Naive thymus-derived CD4-positive, alpha-beta T cell (primary cell): ENCODE measurements at regions of chr18 and their contacts with region 1.

Region 1: GRCh38 chr18:35972197-35973052 is at the start of gene RMP24:
- DNase-seq: peak; percentile 80 to 93 (median 90)
- ATAC-seq: peak; percentile 94
- H3K4me3 ChIP-seq: peak within 1 kb of the TSS; percentile 76
- H3K4me3 Mint-ChIP-seq: peak within 1 kb of the TSS; percentile 83 to 100 (median 96)
- H3K27ac ChIP-seq: peak within 1 kb of the TSS; percentile 82
- H3K27ac Mint-ChIP-seq: peak within 1 kb of the TSS; percentile 91 to 99 (median 96)
- H3K4me1 ChIP-seq: peaks cover 33% of the 10 kb centered on the region in 2 donors
- H3K4me1 Mint-ChIP-seq: peaks cover 36 to 78% (median 67%) of the 10 kb centered on the region in 7 donors
- H3K27me3 ChIP-seq: no peaks in the 10 kb centered on the region
- H3K27me3 Mint-ChIP-seq: no peaks in the 10 kb centered on the region

Region 2: GRCh38 chr18:34976899-34977837 is 995.3 kb before region 1 on chr18:
- CTCF ChIA-PET with region 1: no interaction called
- POLR2A ChIA-PET with region 1: no interaction called
- intact Hi-C with region 1: loop called in 1 of 2 experiments (anchors 1 kb)
- DNase-seq: peak; percentile 60 to 78 (median 72)
- ATAC-seq: peak; percentile 84
- H3K4me3 ChIP-seq: peak overlapping the region; percentile 74
- H3K4me3 Mint-ChIP-seq: peak overlapping the region; percentile 89 to 99 (median 94)
- H3K27ac ChIP-seq: peak overlapping the region; percentile 54
- H3K27ac Mint-ChIP-seq: peak overlapping the region in 6 of 9 donors; percentile 24 to 72 (median 39)
- H3K4me1 ChIP-seq: no peaks in the 10 kb centered on the region
- H3K4me1 Mint-ChIP-seq: peaks cover 18 to 37% (median 24%) of the 10 kb centered on the region in 7 donors
- H3K27me3 ChIP-seq: peaks cover 0 to 3% of the 10 kb centered on the region in 2 donors
- H3K27me3 Mint-ChIP-seq: peaks cover 0 to 66% (median 0%) of the 10 kb centered on the region in 5 donors

Region 3: DNA sequence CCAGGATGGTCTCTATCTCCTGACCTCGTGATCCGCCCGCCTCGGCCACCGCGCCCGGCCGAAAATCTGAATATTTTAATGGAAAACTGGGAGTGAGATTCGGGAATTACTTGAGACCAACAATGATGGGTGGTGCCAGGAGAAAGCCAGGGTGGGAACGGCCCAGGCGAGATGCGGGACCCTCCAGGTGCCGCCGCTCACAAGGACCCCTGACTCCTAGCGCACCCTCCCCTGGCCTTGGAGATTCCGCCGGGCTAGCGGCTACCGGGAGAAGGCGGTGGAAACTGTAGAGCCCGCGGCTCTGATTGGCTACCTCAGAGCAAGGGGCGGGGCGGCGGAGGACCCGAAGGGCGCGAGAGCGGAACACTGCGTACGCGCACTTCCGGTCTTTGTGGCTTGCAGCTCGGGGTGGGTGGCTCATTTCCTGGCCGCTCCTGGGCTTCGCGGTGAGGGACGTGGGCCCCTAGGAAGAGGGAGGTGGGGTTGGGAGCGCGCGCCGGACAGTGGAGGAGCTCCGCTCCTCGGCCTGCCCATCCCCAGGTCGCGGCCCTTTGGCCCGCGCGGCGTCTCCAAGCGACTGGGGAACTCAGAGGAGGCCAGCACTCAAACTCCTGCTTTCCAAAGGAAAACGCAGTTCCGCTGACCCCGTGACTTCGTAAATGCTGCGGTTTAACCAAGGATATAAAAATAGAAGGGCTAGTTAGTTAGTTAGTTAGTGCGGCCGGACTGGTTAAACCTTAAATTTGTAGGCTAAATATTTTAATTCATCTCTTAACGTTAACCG is 731.6 kb before region 1 on chr18 and contains the start of gene ZNF397:
- CTCF ChIA-PET with region 1: no interaction called
- POLR2A ChIA-PET with region 1: interaction called, 5 read pairs
- intact Hi-C with region 1: loop called (anchors 1 kb)
- DNase-seq: peak; percentile 87 to 96 (median 91)
- ATAC-seq: peak; percentile 99
- H3K4me3 ChIP-seq: peak within 1 kb of the TSS; percentile 94
- H3K4me3 Mint-ChIP-seq: peak within 1 kb of the TSS; percentile 88 to 98 (median 96)
- H3K27ac ChIP-seq: peak within 1 kb of the TSS; percentile 97
- H3K27ac Mint-ChIP-seq: peak within 1 kb of the TSS; percentile 90 to 99 (median 98)
- H3K4me1 ChIP-seq: peaks cover 9 to 17% of the 10 kb centered on the region in 2 donors
- H3K4me1 Mint-ChIP-seq: peaks cover 16 to 41% (median 31%) of the 10 kb centered on the region in 7 donors
- H3K27me3 ChIP-seq: no peaks in the 10 kb centered on the region
- H3K27me3 Mint-ChIP-seq: no peaks in the 10 kb centered on the region
- total RNA-seq, gene ZNF397: 12.1 to 59.1 (median 27.6) TPM

Region 4: DNA sequence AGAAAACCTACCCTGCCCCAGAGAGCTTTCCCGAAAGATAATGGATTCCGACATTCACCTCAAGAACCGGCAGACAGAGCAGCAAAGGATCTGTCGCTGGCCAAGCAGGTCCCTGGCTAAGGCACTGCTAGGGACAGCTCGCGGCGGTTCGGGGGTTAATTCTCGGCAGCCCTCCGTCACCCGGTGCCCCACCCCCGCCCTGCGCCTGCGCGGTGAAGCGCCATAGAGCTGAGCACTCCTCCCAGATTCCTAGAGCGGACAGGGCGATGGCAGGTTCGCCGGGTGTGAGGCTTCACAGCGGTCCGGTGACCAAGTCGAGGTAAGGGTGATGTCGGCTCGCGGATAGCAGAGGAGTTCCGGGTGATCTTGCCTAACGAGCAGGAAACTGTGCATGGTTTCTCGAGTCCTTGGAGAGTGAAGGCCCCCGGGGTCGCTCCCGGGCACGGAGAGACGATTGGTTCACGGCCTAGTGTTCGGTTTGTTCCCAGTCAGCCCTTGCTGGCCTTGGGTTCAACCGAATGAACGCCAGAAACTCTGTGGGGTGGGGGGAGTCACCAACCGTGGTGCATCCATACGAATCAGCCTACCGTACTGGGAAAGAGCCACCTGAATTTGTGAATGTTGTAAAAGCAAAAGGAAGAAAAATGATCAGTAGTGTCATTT is 682.2 kb before region 1 on chr18 and contains the start of gene ZSCAN30:
- CTCF ChIA-PET with region 1: no interaction called
- POLR2A ChIA-PET with region 1: no interaction called
- intact Hi-C with region 1: loop called (anchors 1 kb)
- DNase-seq: peak; percentile 90 to 96 (median 94)
- ATAC-seq: peak; percentile 99
- H3K4me3 ChIP-seq: peak within 1 kb of the TSS; percentile 90
- H3K4me3 Mint-ChIP-seq: peak within 1 kb of the TSS; percentile 97 to 99 (median 98)
- H3K27ac ChIP-seq: peak within 1 kb of the TSS; percentile 86
- H3K27ac Mint-ChIP-seq: peak within 1 kb of the TSS; percentile 94 to 100 (median 98)
- H3K4me1 ChIP-seq: peaks cover 16 to 18% of the 10 kb centered on the region in 2 donors
- H3K4me1 Mint-ChIP-seq: peaks cover 29 to 86% (median 75%) of the 10 kb centered on the region in 7 donors
- H3K27me3 ChIP-seq: no peaks in the 10 kb centered on the region
- H3K27me3 Mint-ChIP-seq: no peaks in the 10 kb centered on the region
- total RNA-seq, gene ZSCAN30: 14.0 to 23.2 (median 20.8) TPM

Region 5: DNA sequence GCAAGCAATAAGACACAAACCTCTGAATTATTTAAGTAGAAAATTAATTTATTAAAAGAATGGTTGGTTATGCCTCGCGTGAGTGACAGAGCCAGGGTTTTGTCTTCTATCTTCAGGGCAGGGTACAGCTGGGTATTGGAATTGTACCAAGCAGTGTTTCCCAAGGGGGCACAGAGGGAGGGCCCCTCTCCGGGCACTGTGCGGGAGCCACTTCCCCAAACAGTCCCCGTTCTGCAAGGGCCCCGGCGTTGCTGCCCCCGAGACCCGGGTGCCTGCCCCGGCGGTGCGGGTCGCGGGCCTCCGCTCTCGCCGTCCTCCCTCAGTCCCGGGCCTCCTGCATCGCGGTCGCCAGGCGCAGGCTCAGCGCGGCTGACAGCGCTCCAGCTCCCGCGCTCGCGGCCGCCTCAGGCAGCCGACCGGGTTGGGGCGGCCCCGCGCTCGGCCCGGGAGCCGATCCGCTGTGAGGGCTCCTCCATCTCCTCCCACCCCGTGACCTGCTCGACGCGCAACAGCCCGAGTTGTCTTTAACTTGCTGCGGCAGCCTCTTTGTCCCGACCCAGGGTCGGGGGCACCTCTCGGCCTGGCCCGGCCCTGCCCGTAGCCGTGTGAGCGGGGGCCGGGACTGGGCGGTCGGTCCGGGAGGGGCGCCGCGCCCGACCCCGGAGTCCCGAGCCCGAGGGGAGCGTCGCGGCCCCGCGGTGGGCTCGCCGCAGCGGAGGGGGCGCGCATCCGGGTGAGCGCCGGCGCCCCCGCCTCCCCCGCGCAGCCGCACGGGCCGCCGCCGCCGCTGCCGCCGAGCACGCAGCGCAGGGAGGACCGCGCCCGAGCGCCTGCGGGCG is 391.5 kb before region 1 on chr18:
- CTCF ChIA-PET with region 1: no interaction called
- POLR2A ChIA-PET with region 1: interaction called, 4 read pairs
- intact Hi-C with region 1: loop called (anchors 1 to 2 kb)
- DNase-seq: peak; percentile 54 to 70 (median 63)
- ATAC-seq: peak; percentile 84
- H3K4me3 ChIP-seq: peak overlapping the region; percentile 61
- H3K4me3 Mint-ChIP-seq: peak overlapping the region; percentile 60 to 80 (median 72)
- H3K27ac ChIP-seq: peak overlapping the region; percentile 77
- H3K27ac Mint-ChIP-seq: peak overlapping the region in 5 of 9 donors; percentile 37 to 80 (median 63)
- H3K4me1 ChIP-seq: peaks cover 11% of the 10 kb centered on the region in 2 donors
- H3K4me1 Mint-ChIP-seq: peaks cover 13 to 39% (median 28%) of the 10 kb centered on the region in 7 donors
- H3K27me3 ChIP-seq: no peaks in the 10 kb centered on the region
- H3K27me3 Mint-ChIP-seq: peaks cover 0 to 18% (median 7%) of the 10 kb centered on the region in 5 donors

Region 6: DNA sequence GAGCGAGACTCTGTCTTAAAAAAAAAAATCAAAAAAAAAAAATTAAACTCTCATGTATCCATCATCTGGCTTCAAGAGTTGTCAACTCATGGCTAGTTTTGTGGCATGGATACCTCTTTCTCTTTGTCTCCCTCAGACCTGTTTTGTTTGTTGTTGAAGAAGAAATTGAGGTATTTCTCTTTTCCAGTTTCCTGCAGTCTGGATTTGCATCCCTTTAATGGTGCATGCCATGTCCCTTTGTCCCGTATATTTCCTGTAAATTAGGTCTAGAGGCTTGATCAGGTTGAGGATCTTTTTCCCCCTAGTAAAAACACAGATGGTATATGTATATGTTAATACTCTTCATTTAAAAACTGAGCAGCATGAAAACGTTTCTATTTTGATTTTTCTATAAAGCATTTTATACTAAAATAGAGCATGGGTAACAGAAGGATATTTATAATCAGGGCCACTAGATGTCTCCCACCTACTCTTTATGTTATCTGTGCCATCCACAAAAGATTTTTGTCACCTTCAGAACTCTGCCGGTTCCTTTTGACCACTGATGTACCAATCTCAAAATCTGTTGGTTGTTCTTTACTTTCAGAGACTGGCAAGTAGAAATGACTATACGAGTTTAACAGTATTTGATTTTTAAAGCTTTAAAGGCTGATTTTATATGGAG is 310.8 kb before region 1 on chr18:
- CTCF ChIA-PET with region 1: no interaction called
- POLR2A ChIA-PET with region 1: no interaction called
- intact Hi-C with region 1: no loop called
- DNase-seq: no peak
- ATAC-seq: no peak
- H3K4me3 ChIP-seq: no peak overlapping the region
- H3K4me3 Mint-ChIP-seq: no peak overlapping the region
- H3K27ac ChIP-seq: no peak overlapping the region
- H3K27ac Mint-ChIP-seq: peak overlapping the region in 1 of 9 donors; percentile 26
- H3K4me1 ChIP-seq: no peaks in the 10 kb centered on the region
- H3K4me1 Mint-ChIP-seq: peaks cover 0 to 10% (median 8%) of the 10 kb centered on the region in 7 donors
- H3K27me3 ChIP-seq: no peaks in the 10 kb centered on the region
- H3K27me3 Mint-ChIP-seq: no peaks in the 10 kb centered on the region

Region 7: GRCh38 chr18:36067055-36067957 is 94.9 kb after region 1 on chr18 and contains the start of gene RPRD1A:
- CTCF ChIA-PET with region 1: no interaction called
- POLR2A ChIA-PET with region 1: interaction called, 16 read pairs
- intact Hi-C with region 1: loop called (anchors 1 kb)
- DNase-seq: peak; percentile 90 to 98 (median 94)
- ATAC-seq: peak; percentile 96
- H3K4me3 ChIP-seq: peak within 1 kb of the TSS; percentile 88
- H3K4me3 Mint-ChIP-seq: peak within 1 kb of the TSS; percentile 92 to 98 (median 96)
- H3K27ac ChIP-seq: peak within 1 kb of the TSS; percentile 79
- H3K27ac Mint-ChIP-seq: peak within 1 kb of the TSS; percentile 85 to 97 (median 94)
- H3K4me1 ChIP-seq: peaks cover 11 to 16% of the 10 kb centered on the region in 2 donors
- H3K4me1 Mint-ChIP-seq: peaks cover 26 to 50% (median 44%) of the 10 kb centered on the region in 7 donors
- H3K27me3 ChIP-seq: no peaks in the 10 kb centered on the region
- H3K27me3 Mint-ChIP-seq: peaks cover 0 to 5% (median 0%) of the 10 kb centered on the region in 5 donors
- total RNA-seq, gene RPRD1A: 22.6 to 51.3 (median 28.7) TPM

Region 8: GRCh38 chr18:36828630-36829361 is 856.4 kb after region 1 on chr18 and contains the starts of genes KIAA1328 and TPGS2:
- CTCF ChIA-PET with region 1: no interaction called
- POLR2A ChIA-PET with region 1: interaction called, 4 read pairs
- intact Hi-C with region 1: loop called (anchors 1 kb)
- DNase-seq: peak; percentile 77 to 90 (median 87)
- ATAC-seq: peak; percentile 96
- H3K4me3 ChIP-seq: peak within 1 kb of the TSS; percentile 79
- H3K4me3 Mint-ChIP-seq: peak within 1 kb of the TSS; percentile 73 to 98 (median 92)
- H3K27ac ChIP-seq: peak within 1 kb of the TSS; percentile 75
- H3K27ac Mint-ChIP-seq: peak within 1 kb of the TSS; percentile 57 to 98 (median 90)
- H3K4me1 ChIP-seq: peaks cover 15 to 18% of the 10 kb centered on the region in 2 donors
- H3K4me1 Mint-ChIP-seq: peaks cover 27 to 60% (median 47%) of the 10 kb centered on the region in 7 donors
- H3K27me3 ChIP-seq: no peaks in the 10 kb centered on the region
- H3K27me3 Mint-ChIP-seq: no peaks in the 10 kb centered on the region
- total RNA-seq, gene KIAA1328: 8.1 to 17.6 (median 16.0) TPM
- total RNA-seq, gene TPGS2: 16.9 to 92.8 (median 53.5) TPM